A549 (cell line): ENCODE measurements at regions of chr12 and their contacts with region 1.

Region 1: GRCh38 chr12:46382964-46383653 is 10.5 kb upstream of the SLC38A2 start:
- DNase-seq: peak; percentile 73 to 98
- ATAC-seq: peak; percentile 85 to 86
- H3K4me3 ChIP-seq: peak overlapping the region; percentile 54
- H3K27ac ChIP-seq: peak overlapping the region; percentile 93 to 99
- H3K4me1 ChIP-seq: peaks cover 41% of the 10 kb centered on the region
- CTCF ChIP-seq: peak; percentile 36; the same call in 2 of the 3 replicates
- EP300 ChIP-seq: peak in 1 of 2 experiments; percentile 50; a peak in 1 of 5 replicates
- POLR2A ChIP-seq: peak; percentile 68
- RAD21 ChIP-seq: peak in 1 of 2 experiments; percentile 32; a peak in 2 of 5 replicates

Region 2: DNA sequence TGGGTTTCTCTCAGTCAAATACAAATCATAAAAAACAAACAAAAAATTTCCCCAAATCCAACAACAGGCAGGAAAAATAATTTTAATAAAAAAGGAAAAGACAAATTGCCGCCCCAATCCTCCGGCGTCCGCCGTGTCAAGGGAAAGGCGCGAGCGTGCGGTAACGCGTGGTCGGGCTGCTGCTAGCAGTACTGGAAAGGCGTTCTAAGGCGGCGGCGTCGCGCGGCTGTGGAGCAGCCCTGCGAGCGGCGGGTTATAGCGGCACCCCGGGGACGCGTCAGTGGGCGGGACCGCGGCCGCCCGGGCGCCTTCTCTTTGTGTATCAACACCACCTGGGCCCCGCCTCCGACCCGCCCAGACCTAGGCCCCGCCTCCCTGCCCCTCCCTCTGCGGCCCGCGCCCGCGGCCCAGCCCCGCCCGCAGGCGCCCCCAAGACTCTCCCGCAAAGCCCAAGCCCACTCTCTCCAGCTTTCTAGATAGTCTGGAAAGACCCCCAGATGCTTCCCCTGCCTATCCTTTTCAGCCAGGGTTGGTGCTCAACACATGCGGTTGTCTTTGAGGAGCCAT is 10.5 kb before region 1 on chr12 and contains the start of gene SLC38A2:
- CTCF ChIA-PET with region 1: interaction called, 3 read pairs
- POLR2A ChIA-PET with region 1: interaction called, 28 read pairs
- DNase-seq: peak; percentile 87 to 94
- ATAC-seq: peak; percentile 81 to 88
- H3K4me3 ChIP-seq: peak within 1 kb of the TSS; percentile 91
- H3K27ac ChIP-seq: peak within 1 kb of the TSS; percentile 99 to 100
- H3K4me1 ChIP-seq: peaks cover 30% of the 10 kb centered on the region
- CTCF ChIP-seq: no peak
- EP300 ChIP-seq: no peak
- POLR2A ChIP-seq: peak; percentile 99
- RAD21 ChIP-seq: peak in 1 of 2 experiments; percentile 1; a peak in 3 of 5 replicates
- polyA plus RNA-seq, gene SLC38A2: 366 and 519 TPM in 2 replicates

Region 3: DNA sequence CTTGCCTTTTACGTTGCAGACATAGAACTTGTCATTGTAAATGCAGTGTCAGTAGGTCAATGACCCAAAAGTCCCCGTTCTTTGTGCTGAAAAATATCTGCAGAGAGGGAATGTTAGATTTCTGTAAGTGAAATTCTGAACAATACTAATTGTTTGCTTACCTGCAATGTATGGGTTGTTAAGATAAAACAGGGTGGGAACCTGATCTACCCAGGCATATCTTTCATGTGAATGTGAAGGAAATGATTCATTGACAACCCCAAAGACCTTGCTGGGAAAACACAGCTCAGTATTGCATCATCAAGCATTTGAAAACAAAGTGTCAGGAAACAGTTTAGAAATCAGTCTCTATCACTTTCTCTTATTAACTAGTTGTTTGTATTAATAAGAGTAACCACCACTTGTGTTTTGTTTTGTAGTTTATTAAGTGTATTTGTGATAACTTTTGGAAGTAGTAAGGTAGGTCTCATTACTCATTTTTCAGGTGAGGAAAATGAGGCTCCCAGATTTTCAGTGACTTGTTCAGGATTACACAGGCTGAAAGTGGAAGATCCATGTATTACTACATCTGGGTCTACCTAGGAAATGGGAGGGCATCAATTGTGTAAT is 47.3 kb after region 1 on chr12:
- CTCF ChIA-PET with region 1: interaction called, 5 read pairs
- POLR2A ChIA-PET with region 1: interaction called, 14 read pairs
- DNase-seq: peak; percentile 74 to 93
- ATAC-seq: peak; percentile 79 to 83
- H3K4me3 ChIP-seq: no peak overlapping the region
- H3K27ac ChIP-seq: peak overlapping the region; percentile 77 to 87
- H3K4me1 ChIP-seq: peaks cover 43% of the 10 kb centered on the region
- CTCF ChIP-seq: no peak
- EP300 ChIP-seq: peak; percentile 89 to 95
- POLR2A ChIP-seq: no peak
- RAD21 ChIP-seq: peak; percentile 30 to 52; a peak in 2 of 5 replicates

Region 4: DNA sequence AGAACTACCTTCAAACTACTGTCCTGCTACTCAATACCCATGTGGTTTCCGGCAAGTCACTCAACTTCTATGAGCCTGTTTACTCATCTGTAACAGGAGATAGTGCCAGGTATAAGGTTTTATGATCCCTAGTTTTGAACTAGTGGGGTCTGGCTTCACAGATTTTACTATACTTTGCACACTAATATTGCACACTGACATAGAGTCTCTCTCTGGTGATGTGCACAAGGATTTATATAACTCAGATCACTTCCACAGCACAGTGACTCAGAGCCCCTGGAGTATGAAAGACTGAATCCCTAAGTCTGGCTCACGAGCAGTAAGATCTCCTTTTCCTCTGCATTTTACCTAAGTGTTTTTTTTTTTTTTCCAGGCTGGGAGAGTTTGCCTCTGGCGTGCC is 59.1 kb after region 1 on chr12:
- CTCF ChIA-PET with region 1: no interaction called
- POLR2A ChIA-PET with region 1: no interaction called
- DNase-seq: no peak
- ATAC-seq: peak in 1 of 2 experiments; percentile 57; a peak in 3 of 6 replicates
- H3K4me3 ChIP-seq: no peak overlapping the region
- H3K27ac ChIP-seq: peak overlapping the region; percentile 10 to 37; a peak in 4 of 6 replicates
- H3K4me1 ChIP-seq: peaks cover 50% of the 10 kb centered on the region
- CTCF ChIP-seq: no peak
- EP300 ChIP-seq: no peak
- POLR2A ChIP-seq: no peak
- RAD21 ChIP-seq: no peak